K562 (cell line): ENCODE measurements at regions of chr6 and their contacts with region 1.

Region 1: GRCh38 chr6:163956571-163957407 is 542.3 kb downstream of the QKI start:
- DNase-seq: peak; percentile 88 to 92 (median 90)
- ATAC-seq: peak; percentile 99
- H3K4me3 ChIP-seq: no peak overlapping the region
- H3K27ac ChIP-seq: no peak overlapping the region
- H3K4me1 ChIP-seq: no peaks in the 10 kb centered on the region
- H3K27me3 ChIP-seq: peaks cover 26 to 36% of the 10 kb centered on the region in 2 experiments
- CTCF ChIP-seq: peak; percentile 95 to 98 (median 97)
- EP300 ChIP-seq: no peak
- POLR2A ChIP-seq: no peak
- RAD21 ChIP-seq: peak; percentile 96 to 97

Region 2: DNA sequence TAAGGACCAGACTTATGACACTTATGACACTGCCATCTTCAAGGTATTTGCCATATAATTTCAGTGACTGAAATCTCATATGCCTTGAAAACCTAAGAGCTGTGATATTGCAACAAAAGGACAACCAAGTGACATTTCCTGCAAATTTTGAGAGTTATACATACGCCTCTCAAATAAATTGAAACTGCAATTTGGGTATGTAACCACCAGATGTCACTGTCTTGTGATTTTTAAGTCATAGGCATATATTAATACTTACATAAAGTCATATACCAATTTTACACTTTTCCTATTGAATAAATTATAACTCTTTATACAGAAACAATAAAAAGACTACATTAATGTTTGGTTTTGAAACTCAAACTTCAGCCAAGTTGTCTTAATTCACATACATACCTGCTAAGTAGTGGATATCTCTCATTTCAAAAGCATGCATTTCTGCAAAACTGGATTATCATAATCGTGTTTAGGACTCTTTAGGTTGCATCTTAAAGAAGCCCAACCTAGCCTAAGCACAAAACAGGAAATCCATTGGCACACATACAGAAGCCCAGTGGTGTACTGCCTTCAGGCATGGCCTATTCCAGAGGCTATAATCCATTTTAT is 1048.8 kb before region 1 on chr6:
- CTCF ChIA-PET with region 1: no interaction called
- POLR2A ChIA-PET with region 1: no interaction called
- in situ Hi-C with region 1: no loop called
- intact Hi-C with region 1: loop called (anchors 5 kb)
- DNase-seq: peak in 2 of 4 experiments; percentile 14 to 44
- ATAC-seq: peak; percentile 43; the same call in 1 of the 3 replicates
- H3K4me3 ChIP-seq: no peak overlapping the region
- H3K27ac ChIP-seq: no peak overlapping the region
- H3K4me1 ChIP-seq: no peaks in the 10 kb centered on the region
- H3K27me3 ChIP-seq: no peaks in the 10 kb centered on the region
- CTCF ChIP-seq: peak in 1 of 3 experiments; percentile 54; a peak in 3 of 6 replicates
- EP300 ChIP-seq: no peak
- POLR2A ChIP-seq: no peak
- RAD21 ChIP-seq: peak; percentile 52 to 59

Region 3: DNA sequence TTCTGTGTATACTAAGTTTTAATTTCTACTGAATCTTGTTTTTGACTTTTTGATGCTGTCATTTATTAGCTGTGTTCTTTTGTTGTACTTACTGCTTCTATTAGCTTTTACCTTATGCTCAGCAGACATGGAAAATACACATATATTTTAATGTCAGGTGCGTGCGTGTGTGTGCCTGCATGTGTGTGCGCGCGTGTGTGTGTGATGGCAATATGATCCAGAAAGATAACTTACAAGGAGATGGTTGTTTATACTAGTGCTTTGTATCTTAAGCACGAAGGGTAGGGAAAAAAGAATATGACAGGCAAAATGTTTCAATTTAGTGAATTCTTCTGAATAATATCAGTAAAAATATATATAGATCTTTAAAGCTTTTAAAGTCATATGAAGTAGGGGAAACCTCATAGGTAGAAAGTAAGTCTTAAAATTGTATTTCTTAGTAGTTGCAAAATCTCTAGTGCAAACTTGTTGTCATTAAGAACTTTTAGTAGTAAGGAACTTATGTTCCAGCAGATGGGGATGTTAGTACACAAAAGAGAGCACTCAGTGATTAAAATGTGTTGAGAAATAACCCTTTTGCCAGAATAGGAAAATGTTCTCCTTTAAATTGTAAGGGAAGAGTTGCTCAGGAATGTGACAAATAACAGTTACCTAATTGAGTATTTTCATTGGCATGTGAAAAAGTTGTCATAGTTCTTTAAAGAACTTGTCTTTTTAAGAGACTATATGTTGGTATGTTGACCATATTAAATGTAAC is 529.1 kb before region 1 on chr6:
- CTCF ChIA-PET with region 1: interaction called, 8 read pairs
- POLR2A ChIA-PET with region 1: no interaction called
- in situ Hi-C with region 1: loop called (anchors 5 kb)
- intact Hi-C with region 1: no loop called
- DNase-seq: peak in 2 of 4 experiments; percentile 24 to 59
- ATAC-seq: peak; percentile 55
- H3K4me3 ChIP-seq: no peak overlapping the region
- H3K27ac ChIP-seq: no peak overlapping the region
- H3K4me1 ChIP-seq: peaks cover 3 to 10% of the 10 kb centered on the region in 2 experiments; a peak in 2 of 5 replicates
- H3K27me3 ChIP-seq: no peaks in the 10 kb centered on the region
- CTCF ChIP-seq: peak in 1 of 3 experiments; percentile 70; a peak in 2 of 6 replicates
- EP300 ChIP-seq: no peak
- POLR2A ChIP-seq: no peak
- RAD21 ChIP-seq: peak; percentile 80 to 88

Region 4: DNA sequence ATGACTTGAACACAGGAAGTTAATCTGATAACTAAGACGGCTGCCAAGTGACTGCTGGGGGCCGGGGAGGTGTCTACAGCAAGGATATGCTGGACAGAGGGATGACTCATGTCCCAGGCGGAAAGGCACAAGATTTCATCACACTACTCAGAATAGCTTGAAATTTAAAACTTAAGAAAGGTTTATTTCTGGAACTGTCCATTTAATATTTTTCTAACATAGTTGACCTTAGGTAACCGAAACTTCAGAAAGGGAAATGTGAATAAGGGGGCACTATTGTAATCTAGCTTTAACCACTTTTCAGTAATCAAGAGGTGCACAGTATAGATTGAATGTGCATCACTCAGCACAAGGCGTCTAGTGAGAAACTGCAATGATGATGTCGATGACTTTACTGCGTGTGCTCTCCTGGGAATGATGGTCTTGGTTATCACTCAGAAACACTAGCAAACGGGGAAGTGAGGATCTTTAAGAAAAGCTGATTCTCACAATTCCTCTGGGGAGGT is 370.8 kb before region 1 on chr6:
- CTCF ChIA-PET with region 1: no interaction called
- POLR2A ChIA-PET with region 1: no interaction called
- in situ Hi-C with region 1: no loop called
- intact Hi-C with region 1: loop called (anchors 10 kb)
- DNase-seq: peak; percentile 57 to 92 (median 74)
- ATAC-seq: peak; percentile 97
- H3K4me3 ChIP-seq: no peak overlapping the region
- H3K27ac ChIP-seq: peak overlapping the region; percentile 79
- H3K4me1 ChIP-seq: peaks cover 10 to 19% of the 10 kb centered on the region in 2 experiments; a peak in 4 of 5 replicates
- H3K27me3 ChIP-seq: no peaks in the 10 kb centered on the region
- CTCF ChIP-seq: no peak
- EP300 ChIP-seq: peak; percentile 84
- POLR2A ChIP-seq: no peak
- RAD21 ChIP-seq: 0 out of 4 replicates have a peak, but pooled peaks of 1 of the 2 experiments have one; percentile 3

Region 5: DNA sequence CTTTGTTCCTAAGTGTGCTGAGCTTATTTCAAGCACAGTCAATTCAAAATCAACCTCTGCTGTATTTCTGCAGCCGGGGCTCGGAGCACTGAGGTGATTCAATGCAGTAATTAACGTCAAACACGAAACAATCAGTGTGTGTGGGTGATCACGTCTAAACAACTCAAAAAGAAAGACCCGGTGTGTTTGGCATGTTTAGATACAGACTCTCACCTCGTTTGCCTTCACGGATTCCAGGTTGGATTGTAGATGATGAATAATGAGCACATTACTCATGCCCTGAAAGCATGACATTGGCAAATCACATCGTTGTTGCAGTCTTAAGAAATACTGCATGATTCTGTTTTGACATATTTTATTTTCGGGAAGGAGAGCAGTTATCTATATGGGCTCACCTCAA is 311.2 kb before region 1 on chr6:
- CTCF ChIA-PET with region 1: no interaction called
- POLR2A ChIA-PET with region 1: no interaction called
- in situ Hi-C with region 1: no loop called
- intact Hi-C with region 1: no loop called
- DNase-seq: peak in 2 of 4 experiments; percentile 36 to 48
- ATAC-seq: no peak
- H3K4me3 ChIP-seq: no peak overlapping the region
- H3K27ac ChIP-seq: no peak overlapping the region
- H3K4me1 ChIP-seq: peaks cover 0 to 6% of the 10 kb centered on the region in 2 experiments; a peak in 2 of 5 replicates
- H3K27me3 ChIP-seq: peaks cover 33 to 63% of the 10 kb centered on the region in 2 experiments
- CTCF ChIP-seq: no peak
- EP300 ChIP-seq: no peak
- POLR2A ChIP-seq: no peak
- RAD21 ChIP-seq: no peak

Region 6: GRCh38 chr6:164106345-164106769 is 149.6 kb after region 1 on chr6:
- CTCF ChIA-PET with region 1: no interaction called
- POLR2A ChIA-PET with region 1: no interaction called
- in situ Hi-C with region 1: no loop called
- intact Hi-C with region 1: loop called (anchors 5 kb)
- DNase-seq: peak; percentile 68 to 74 (median 70)
- ATAC-seq: peak; percentile 86
- H3K4me3 ChIP-seq: peak overlapping the region; percentile 14; the same call in 1 of the 2 replicates
- H3K27ac ChIP-seq: no peak overlapping the region
- H3K4me1 ChIP-seq: peaks cover 5 to 21% of the 10 kb centered on the region in 2 experiments; a peak in 4 of 5 replicates
- H3K27me3 ChIP-seq: peaks cover 2 to 12% of the 10 kb centered on the region in 2 experiments; a peak in 2 of 5 replicates
- CTCF ChIP-seq: peak; percentile 61 to 82 (median 68)
- EP300 ChIP-seq: no peak
- POLR2A ChIP-seq: no peak
- RAD21 ChIP-seq: peak; percentile 60 to 72